Esophagus squamous epithelium (tissue), 5 donors: ENCODE measurements at regions of chr9 and their contacts with region 1.

Region 1: DNA sequence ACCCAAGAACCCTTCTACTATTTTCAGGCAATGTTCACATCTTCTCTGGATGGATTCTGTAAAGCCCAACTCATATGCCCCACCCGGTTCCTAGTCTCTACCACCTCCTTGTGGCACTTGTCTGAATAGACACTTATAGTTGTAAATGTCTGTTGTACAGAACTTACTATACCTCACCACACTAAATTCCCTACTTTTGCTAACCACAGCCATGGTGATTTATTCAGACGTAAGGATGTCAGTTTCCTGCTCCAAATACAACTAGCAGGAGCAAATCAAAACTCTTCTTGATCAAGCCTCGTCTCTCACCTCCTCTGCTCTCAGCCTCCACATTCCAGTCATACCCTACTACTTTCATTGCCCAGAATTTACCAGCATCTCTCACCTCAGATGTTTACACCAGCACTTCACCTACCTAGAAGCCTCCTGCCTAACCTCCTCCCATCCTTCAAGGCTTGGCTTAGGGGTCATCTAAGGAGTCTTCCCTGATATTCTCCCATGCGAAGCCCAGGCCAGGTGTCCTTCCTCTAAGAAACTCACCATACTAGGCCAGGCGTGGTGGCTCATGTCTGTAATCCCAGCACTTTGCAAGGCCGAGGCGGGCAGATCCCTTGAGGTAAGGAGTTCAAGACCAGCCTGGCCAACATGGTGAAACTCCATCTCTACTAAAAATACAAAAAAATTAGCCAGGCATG is 75.5 kb downstream of the MAPKAP1 start:
- DNase-seq: no peak
- H3K4me3 ChIP-seq: no peak overlapping the region
- H3K27ac ChIP-seq: peak overlapping the region in 1 of 4 donors; percentile 61
- H3K4me1 ChIP-seq: peaks cover 17 to 57% (median 24%) of the 10 kb centered on the region in 3 donors
- H3K27me3 ChIP-seq: no peaks in the 10 kb centered on the region
- CTCF ChIP-seq: peak in 5 of 6 experiments; percentile 39 to 77 (median 56)
- POLR2A ChIP-seq: no peak

Region 2: DNA sequence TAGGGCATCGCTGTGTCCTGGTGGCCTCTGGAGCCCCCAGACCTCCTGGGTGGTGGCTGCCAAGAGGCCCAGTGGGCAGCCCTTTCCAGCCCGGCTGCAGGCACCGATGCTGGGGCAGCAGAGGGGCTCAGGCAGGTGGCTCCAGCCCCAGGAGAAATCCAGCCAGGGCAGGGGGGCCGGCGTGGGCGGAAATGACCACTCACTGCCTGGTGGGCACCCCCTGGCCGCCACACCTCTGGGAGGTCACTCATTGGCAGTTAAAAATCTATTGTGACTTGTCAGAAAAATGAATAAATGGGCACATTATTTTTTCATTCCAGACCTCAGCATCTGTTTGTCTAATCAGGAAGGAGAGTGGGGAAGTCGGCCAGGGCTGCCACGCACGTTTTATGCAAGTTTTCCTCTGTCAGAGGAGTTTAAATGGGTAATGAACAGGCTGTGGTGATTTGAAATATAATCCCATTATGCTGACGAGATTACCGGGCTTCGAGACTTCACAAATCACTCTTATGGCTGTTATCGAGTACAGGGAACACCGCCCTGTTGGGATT is 198.0 kb before region 1 on chr9:
- intact Hi-C with region 1: loop called (anchors 10 kb)
- DNase-seq: no peak
- H3K4me3 ChIP-seq: no peak overlapping the region
- H3K27ac ChIP-seq: no peak overlapping the region
- H3K4me1 ChIP-seq: no peaks in the 10 kb centered on the region
- H3K27me3 ChIP-seq: no peaks in the 10 kb centered on the region
- CTCF ChIP-seq: no peak
- POLR2A ChIP-seq: no peak

Region 3: GRCh38 chr9:125561509-125562217 is 69.9 kb before region 1 on chr9:
- intact Hi-C with region 1: loop called (anchors 5 kb)
- DNase-seq: no peak
- H3K4me3 ChIP-seq: no peak overlapping the region
- H3K27ac ChIP-seq: no peak overlapping the region
- H3K4me1 ChIP-seq: peaks cover 0 to 35% (median 10%) of the 10 kb centered on the region in 3 donors
- H3K27me3 ChIP-seq: no peaks in the 10 kb centered on the region
- CTCF ChIP-seq: no peak
- POLR2A ChIP-seq: no peak

Region 4: GRCh38 chr9:125586172-125586511 is 45.4 kb before region 1 on chr9:
- intact Hi-C with region 1: no loop called
- DNase-seq: no peak
- H3K4me3 ChIP-seq: no peak overlapping the region
- H3K27ac ChIP-seq: no peak overlapping the region
- H3K4me1 ChIP-seq: peaks cover 0 to 27% (median 0%) of the 10 kb centered on the region in 3 donors
- H3K27me3 ChIP-seq: no peaks in the 10 kb centered on the region
- CTCF ChIP-seq: no peak
- POLR2A ChIP-seq: no peak

Region 5: DNA sequence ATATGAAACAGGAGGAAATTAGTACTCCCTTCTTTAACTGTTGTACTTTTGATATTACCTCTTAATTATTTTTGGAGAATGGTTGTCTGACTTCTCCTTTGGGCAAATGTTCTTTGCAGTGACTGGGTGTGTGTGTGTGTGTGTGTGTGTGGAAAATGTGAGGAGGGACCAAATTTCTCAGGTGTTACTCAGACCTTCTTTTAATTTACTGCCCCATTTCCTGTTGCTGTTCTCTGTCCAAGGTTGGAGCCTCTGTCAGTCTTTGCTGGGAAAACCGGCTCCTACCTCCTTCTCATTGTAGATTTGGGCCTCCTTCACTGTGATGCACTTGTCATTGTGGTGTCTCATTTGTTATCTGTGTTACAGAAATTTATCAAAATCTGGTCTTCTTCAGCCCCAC is 184.0 kb after region 1 on chr9:
- intact Hi-C with region 1: no loop called
- DNase-seq: no peak
- H3K4me3 ChIP-seq: no peak overlapping the region
- H3K27ac ChIP-seq: no peak overlapping the region
- H3K4me1 ChIP-seq: peaks cover 0 to 7% (median 0%) of the 10 kb centered on the region in 3 donors
- H3K27me3 ChIP-seq: no peaks in the 10 kb centered on the region
- CTCF ChIP-seq: no peak
- POLR2A ChIP-seq: no peak